PC-9 (cell line): ENCODE measurements at regions of chr15 and their contacts with region 1.

Region 1: GRCh38 chr15:68204776-68205557 is at the start of gene CALML4:
- DNase-seq: no peak
- H3K4me3 ChIP-seq: no peak within 1 kb of the TSS
- H3K27ac ChIP-seq: no peak within 1 kb of the TSS
- H3K4me1 ChIP-seq: no peaks in the 10 kb centered on the region
- H3K27me3 ChIP-seq: no peaks in the 10 kb centered on the region
- CTCF ChIP-seq: no peak
- total RNA-seq, gene CALML4: 10.9 and 12.6 TPM in 2 replicates

Region 2: DNA sequence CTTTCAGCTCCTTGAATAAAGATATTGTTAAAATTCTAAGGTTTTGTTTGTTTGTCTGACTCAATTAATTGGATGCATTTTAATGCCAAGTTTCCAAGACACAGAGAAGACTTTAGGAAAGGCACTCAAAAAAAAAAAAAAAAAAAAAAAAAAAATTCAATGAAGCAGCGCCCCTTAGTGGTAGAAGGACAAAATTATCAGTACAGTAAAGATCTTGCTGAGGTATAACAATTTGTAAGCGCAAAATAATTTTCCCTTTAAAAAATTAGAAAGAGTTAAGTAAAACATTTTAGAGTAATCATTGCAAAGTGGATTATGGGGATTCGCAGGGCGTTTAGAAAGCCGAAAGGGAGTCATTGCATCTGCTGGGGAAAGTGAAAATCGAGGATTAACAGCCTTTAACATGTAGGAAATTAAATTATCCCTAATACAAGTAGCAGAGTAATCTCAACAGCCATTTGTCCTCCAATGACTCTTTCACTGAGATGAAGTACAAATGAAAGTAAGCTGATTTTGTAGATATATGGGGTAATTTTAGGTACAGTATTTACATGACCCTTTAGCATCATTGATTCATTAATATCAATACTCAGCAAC is 1917.4 kb before region 1 on chr15:
- CTCF ChIA-PET with region 1: no interaction called
- POLR2A ChIA-PET with region 1: interaction called, 10 read pairs
- intact Hi-C with region 1: no loop called
- DNase-seq: peak in 1 of 2 experiments; percentile 42
- H3K4me3 ChIP-seq: no peak overlapping the region
- H3K27ac ChIP-seq: no peak overlapping the region
- H3K4me1 ChIP-seq: peaks cover 11% of the 10 kb centered on the region
- H3K27me3 ChIP-seq: no peaks in the 10 kb centered on the region
- CTCF ChIP-seq: peak; percentile 75

Region 3: DNA sequence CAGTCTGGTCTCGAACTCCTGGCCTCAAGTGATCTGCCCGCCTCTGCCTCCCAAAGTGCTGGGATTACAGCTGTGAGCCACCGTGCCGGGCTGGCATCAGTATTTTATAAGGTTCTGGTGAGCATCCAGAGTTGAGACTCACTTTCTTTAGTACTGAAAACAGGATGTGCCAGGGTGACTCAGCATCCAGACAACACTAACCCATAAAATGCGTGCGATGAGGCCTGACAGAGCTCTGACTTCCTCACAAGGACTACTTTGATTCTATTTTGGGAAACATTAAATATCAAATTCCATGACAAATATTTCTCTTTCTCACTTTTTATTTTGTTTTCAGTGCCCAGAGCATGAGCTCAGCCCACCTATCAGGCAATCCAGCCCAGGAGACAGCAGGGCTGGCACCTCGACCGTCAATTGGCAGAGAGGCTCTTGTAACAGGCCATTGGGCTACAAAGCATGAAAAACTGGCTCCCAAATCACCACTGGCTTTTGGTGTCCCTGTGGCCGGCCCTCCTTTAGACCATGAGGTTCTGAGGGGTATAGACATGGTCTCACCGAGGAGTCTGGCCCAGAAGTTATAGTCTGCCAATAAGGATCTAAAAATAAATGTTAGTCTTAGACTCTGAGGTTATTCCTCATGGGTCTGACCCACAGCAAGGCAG is 147.6 kb after region 1 on chr15:
- CTCF ChIA-PET with region 1: no interaction called
- POLR2A ChIA-PET with region 1: interaction called, 10 read pairs
- intact Hi-C with region 1: no loop called
- DNase-seq: peak; percentile 45 to 68
- H3K4me3 ChIP-seq: no peak overlapping the region
- H3K27ac ChIP-seq: peak overlapping the region; percentile 90
- H3K4me1 ChIP-seq: peaks cover 39% of the 10 kb centered on the region
- H3K27me3 ChIP-seq: no peaks in the 10 kb centered on the region
- CTCF ChIP-seq: no peak